ENCODE measurements at regions of chr10 and their contacts with region 1.

Region 1: GRCh38 chr10:22003079-22003913 is at the start of gene DNAJC1:
- DNase-seq: peak; percentile 98
- ATAC-seq: peak; percentile 92
- H3K4me3 Mint-ChIP-seq: peak within 1 kb of the TSS; percentile 87
- H3K27ac Mint-ChIP-seq: peak within 1 kb of the TSS; percentile 91
- H3K4me1 Mint-ChIP-seq: peaks cover 41% of the 10 kb centered on the region
- H3K27me3 Mint-ChIP-seq: no peaks in the 10 kb centered on the region
- CTCF ChIP-seq: no peak
- total RNA-seq, gene DNAJC1: 9.2 and 10.9 TPM in 2 replicates

Region 2: DNA sequence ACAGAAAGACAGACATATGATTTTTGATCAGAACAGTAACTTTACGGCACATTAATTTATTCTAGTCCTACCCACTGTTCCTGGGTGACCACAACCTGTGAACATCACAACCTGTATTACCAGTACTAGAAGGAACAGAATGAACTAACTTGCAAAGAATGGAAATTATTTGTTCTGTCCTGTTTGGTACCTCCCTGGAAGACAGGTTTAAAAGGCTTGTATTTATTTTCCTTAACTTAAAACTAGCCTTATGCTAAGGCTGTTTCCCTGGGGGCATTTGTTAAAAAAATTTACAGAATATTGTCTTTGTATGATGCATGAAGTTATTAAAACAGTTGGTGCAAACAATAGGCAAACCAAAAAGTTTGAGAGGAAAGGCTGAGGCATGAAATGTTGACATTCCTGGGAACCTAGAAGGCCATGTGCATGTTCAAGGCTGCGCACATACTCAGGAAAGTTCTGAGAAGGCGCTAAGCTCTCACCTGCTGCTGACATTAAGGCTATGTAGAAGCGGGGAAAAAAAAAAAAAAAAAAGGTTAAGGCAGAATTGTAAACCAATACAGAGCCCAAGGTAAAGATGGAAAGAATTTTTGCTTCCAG is 132.4 kb before region 1 on chr10:
- CTCF ChIA-PET with region 1: no interaction called
- POLR2A ChIA-PET with region 1: no interaction called
- intact Hi-C with region 1: no loop called
- DNase-seq: no peak
- ATAC-seq: no peak
- H3K4me3 Mint-ChIP-seq: no peak overlapping the region
- H3K27ac Mint-ChIP-seq: no peak overlapping the region
- H3K4me1 Mint-ChIP-seq: no peaks in the 10 kb centered on the region
- H3K27me3 Mint-ChIP-seq: no peaks in the 10 kb centered on the region
- CTCF ChIP-seq: no peak

Region 3: DNA sequence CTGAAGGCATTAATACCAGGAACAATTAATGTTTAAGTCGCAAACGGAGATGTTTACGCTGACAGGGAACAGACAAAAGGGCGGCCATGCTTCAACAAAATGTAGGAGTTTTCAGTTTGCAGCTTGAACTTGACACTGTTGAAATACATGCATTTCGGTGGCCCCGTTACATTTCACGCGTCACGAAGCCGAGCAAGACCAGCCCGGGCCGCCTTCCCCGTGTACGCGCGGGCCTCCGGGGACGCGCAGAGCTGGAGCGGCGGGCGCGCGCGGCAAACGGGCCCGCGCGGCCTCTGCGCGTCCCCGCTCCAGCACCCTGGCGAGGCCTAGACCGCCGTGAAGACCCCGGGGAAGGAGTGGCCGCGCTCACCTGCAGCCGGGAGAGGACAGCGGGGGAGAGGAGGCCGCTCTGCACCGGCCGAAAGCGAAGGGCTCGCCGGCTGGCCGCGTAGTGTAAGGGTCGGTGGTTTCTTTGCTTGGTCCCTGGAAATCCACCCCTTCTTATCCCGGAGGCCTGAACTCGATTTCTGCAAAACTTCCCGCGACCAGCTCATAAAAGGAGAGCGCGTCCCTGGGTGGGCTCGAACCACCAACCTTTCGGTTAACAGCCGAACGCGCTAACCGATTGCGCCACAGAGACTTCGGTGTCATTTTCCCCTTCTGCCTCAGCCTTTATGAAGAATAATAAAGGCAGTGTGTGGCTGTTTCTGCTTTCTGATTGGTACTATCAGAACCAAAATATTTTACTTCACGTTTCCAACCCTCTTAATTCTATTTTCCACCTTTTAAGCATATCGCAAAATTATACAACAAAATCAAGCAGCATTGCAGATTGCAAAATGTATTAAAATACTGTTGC is 225.9 kb after region 1 on chr10:
- CTCF ChIA-PET with region 1: interaction called, 4 read pairs
- POLR2A ChIA-PET with region 1: interaction called, 9 read pairs
- intact Hi-C with region 1: loop called (anchors 1 kb)
- DNase-seq: peak; percentile 81
- ATAC-seq: peak; percentile 79
- H3K4me3 Mint-ChIP-seq: peak overlapping the region; percentile 88
- H3K27ac Mint-ChIP-seq: peak overlapping the region; percentile 96
- H3K4me1 Mint-ChIP-seq: peaks cover 15% of the 10 kb centered on the region
- H3K27me3 Mint-ChIP-seq: peaks cover 7% of the 10 kb centered on the region
- CTCF ChIP-seq: no peak

Region 4: DNA sequence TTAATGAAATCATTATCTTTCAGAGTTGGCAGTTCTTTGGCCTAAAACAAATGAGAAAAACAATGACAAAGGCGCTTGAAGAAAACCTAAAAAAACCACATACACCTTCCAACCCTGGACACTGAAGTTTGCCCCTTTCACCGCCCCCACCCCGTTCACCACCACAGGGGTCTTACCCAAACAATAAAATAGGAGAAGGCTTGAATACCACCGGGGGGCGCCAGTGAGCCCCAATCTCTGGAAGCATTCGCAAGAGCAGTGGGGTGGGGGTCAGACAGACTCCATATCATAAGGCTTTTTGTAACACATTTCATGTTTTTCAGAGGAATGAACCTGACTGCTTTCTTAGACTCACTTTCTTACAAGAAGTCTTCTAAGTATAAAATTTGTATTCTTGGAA is 547.4 kb after region 1 on chr10:
- CTCF ChIA-PET with region 1: no interaction called
- POLR2A ChIA-PET with region 1: no interaction called
- intact Hi-C with region 1: loop called (anchors 5 kb)
- DNase-seq: peak; percentile 50
- ATAC-seq: peak; percentile 64
- H3K4me3 Mint-ChIP-seq: no peak overlapping the region
- H3K27ac Mint-ChIP-seq: no peak overlapping the region
- H3K4me1 Mint-ChIP-seq: peaks cover 3% of the 10 kb centered on the region
- H3K27me3 Mint-ChIP-seq: no peaks in the 10 kb centered on the region
- CTCF ChIP-seq: no peak